A549 (cell line): ENCODE measurements at regions of chr1 and their contacts with region 1.

Region 1: GRCh38 chr1:6414443-6414844 is 5.3 kb downstream of the HES2 start:
- DNase-seq: peak; percentile 53 to 59
- ATAC-seq: peak; percentile 77 to 80
- H3K4me3 ChIP-seq: no peak overlapping the region
- H3K27ac ChIP-seq: peak overlapping the region; percentile 72 to 82
- H3K4me1 ChIP-seq: peaks cover 42% of the 10 kb centered on the region
- CTCF ChIP-seq: peak; percentile 40
- EP300 ChIP-seq: no peak
- POLR2A ChIP-seq: no peak
- RAD21 ChIP-seq: no peak

Region 2: GRCh38 chr1:6401673-6402072 is 12.8 kb before region 1 on chr1:
- CTCF ChIA-PET with region 1: interaction called, 42 read pairs
- POLR2A ChIA-PET with region 1: no interaction called
- DNase-seq: no peak
- ATAC-seq: no peak
- H3K4me3 ChIP-seq: no peak overlapping the region
- H3K27ac ChIP-seq: no peak overlapping the region
- H3K4me1 ChIP-seq: no peaks in the 10 kb centered on the region
- CTCF ChIP-seq: no peak
- EP300 ChIP-seq: no peak
- POLR2A ChIP-seq: no peak
- RAD21 ChIP-seq: no peak

Region 3: DNA sequence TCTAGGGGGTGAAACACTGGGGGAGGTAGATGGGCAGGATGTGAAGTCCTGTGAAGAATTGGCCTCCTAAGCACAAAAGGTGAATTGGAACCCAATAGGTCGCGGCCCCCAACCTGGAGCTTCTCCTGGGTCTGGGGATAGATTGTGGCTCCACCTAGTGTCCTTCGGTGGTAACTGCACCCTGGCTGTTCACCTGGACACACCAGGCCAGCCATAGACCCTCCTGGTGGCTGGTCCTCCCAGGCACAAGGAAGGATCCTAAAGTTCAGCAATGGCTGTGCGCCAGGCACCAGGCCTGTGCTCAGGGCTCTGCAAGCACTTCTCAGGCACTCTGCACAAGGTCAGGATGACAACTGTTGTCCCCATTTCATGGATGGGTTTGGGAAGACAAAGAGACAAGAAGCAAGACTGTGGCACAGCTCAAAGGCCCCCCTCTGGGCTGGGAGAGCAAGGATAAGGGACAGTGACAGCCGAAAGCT is 23.6 kb after region 1 on chr1:
- CTCF ChIA-PET with region 1: interaction called, 96 read pairs
- POLR2A ChIA-PET with region 1: no interaction called
- DNase-seq: peak; percentile 73 to 76
- ATAC-seq: peak; percentile 74 to 83
- H3K4me3 ChIP-seq: no peak overlapping the region
- H3K27ac ChIP-seq: no peak overlapping the region
- H3K4me1 ChIP-seq: peaks cover 5% of the 10 kb centered on the region; the same call in 1 of the 3 replicates
- CTCF ChIP-seq: peak; percentile 56
- EP300 ChIP-seq: no peak
- POLR2A ChIP-seq: no peak
- RAD21 ChIP-seq: peak; percentile 50 to 51; a peak in 4 of 5 replicates